CD8-positive, alpha-beta T cell (primary cell): ENCODE measurements at regions of chr22 and their contacts with region 1.

Region 1: DNA sequence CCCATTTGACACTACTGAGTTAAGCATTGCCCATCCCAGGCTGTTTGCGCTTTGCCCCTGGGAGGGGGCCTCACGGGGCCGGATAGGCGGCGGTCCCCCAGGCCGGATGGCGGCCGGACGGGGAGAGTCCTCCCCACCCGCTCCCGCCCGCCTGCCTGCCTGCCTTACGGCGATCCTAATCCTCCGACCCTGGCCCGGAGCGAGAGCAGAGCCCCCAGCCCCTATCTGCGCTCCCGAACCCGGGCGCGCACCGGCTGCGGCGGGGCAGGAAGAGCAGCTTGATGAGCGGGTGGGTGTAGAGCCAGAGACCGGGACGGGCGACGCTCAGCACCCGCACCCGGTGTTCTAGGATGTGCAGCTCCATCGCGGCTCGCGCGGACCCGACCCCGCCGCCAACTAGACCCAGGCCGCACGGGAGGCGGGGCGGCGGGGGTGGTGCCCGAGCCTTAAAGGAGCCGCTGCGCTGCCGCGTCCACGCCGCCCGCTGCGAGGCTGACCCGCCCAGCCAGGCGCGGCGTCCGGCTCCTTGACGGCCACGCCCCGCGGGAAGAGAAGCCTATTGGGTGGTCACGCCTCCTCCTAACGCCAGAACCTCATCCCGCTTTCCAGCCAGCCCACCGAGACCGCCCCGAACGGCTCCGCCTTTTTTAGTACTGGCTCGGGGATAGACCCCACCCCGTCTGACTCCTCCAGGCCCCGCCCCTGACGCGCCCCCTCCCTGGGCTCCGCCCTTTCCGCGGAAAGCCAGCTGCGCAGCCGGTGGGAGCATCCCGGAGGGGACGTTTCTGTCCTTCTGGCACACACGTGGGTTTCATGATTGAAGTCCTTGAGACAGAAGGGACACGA is at the start of gene CASTOR1:
- DNase-seq: peak; percentile 67 to 93 (median 91)
- ATAC-seq: peak; percentile 82
- H3K4me3 ChIP-seq: peak within 1 kb of the TSS; percentile 72 to 76
- H3K4me3 Mint-ChIP-seq: peak within 1 kb of the TSS; percentile 90
- H3K27ac ChIP-seq: peak within 1 kb of the TSS; percentile 44 to 71
- H3K27ac Mint-ChIP-seq: peak within 1 kb of the TSS; percentile 84
- H3K4me1 ChIP-seq: peaks cover 34% of the 10 kb centered on the region
- H3K4me1 Mint-ChIP-seq: peaks cover 45% of the 10 kb centered on the region
- H3K27me3 ChIP-seq: no peaks in the 10 kb centered on the region
- H3K27me3 Mint-ChIP-seq: no peaks in the 10 kb centered on the region
- CTCF ChIP-seq: no peak
- total RNA-seq, gene CASTOR1: 17.2 to 21.9 TPM

Region 2: DNA sequence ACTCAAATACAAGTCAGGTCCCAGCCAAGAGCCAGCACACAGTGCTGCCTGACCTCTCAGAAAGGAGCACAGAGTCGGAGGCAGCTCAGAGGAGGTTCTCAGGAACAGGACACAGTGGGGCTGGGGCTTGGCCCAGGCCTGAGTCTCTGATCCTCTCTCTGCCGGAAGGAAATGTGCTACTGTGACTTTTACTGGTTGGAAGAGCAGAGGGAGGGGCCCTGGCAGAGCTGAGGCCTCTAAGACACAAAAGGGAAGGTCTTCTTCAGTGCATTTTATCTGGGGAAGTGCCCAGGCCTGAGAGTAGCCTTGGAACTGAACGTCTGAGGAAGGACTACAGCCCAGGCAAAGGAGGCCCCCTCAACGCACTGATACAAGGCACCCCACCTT is 16.2 kb after region 1 on chr22:
- CTCF ChIA-PET with region 1: interaction called, 146 read pairs
- POLR2A ChIA-PET with region 1: interaction called, 130 read pairs
- intact Hi-C with region 1: loop called (anchors 1 kb)
- DNase-seq: peak in 8 of 9 experiments; percentile 43 to 80 (median 56)
- ATAC-seq: peak; percentile 50
- H3K4me3 ChIP-seq: peak overlapping the region; percentile 36 to 38
- H3K4me3 Mint-ChIP-seq: peak overlapping the region; percentile 69
- H3K27ac ChIP-seq: peak overlapping the region; percentile 62 to 77
- H3K27ac Mint-ChIP-seq: peak overlapping the region; percentile 98
- H3K4me1 ChIP-seq: peaks cover 100% of the 10 kb centered on the region
- H3K4me1 Mint-ChIP-seq: peaks cover 97% of the 10 kb centered on the region
- H3K27me3 ChIP-seq: no peaks in the 10 kb centered on the region
- H3K27me3 Mint-ChIP-seq: no peaks in the 10 kb centered on the region
- CTCF ChIP-seq: no peak

Region 3: GRCh38 chr22:30340911-30341685 is 51.7 kb after region 1 on chr22:
- CTCF ChIA-PET with region 1: interaction called, 28 read pairs
- POLR2A ChIA-PET with region 1: interaction called, 3 read pairs
- intact Hi-C with region 1: no loop called
- DNase-seq: no peak
- ATAC-seq: no peak
- H3K4me3 ChIP-seq: no peak overlapping the region
- H3K4me3 Mint-ChIP-seq: no peak overlapping the region
- H3K27ac ChIP-seq: no peak overlapping the region
- H3K27ac Mint-ChIP-seq: no peak overlapping the region
- H3K4me1 ChIP-seq: no peaks in the 10 kb centered on the region
- H3K4me1 Mint-ChIP-seq: peaks cover 2% of the 10 kb centered on the region
- H3K27me3 ChIP-seq: no peaks in the 10 kb centered on the region
- H3K27me3 Mint-ChIP-seq: no peaks in the 10 kb centered on the region
- CTCF ChIP-seq: no peak

Region 4: GRCh38 chr22:30365891-30366290 is 76.5 kb after region 1 on chr22:
- CTCF ChIA-PET with region 1: interaction called, 15 read pairs
- POLR2A ChIA-PET with region 1: no interaction called
- intact Hi-C with region 1: no loop called
- DNase-seq: no peak
- ATAC-seq: no peak
- H3K4me3 ChIP-seq: no peak overlapping the region
- H3K4me3 Mint-ChIP-seq: no peak overlapping the region
- H3K27ac ChIP-seq: no peak overlapping the region
- H3K27ac Mint-ChIP-seq: no peak overlapping the region
- H3K4me1 ChIP-seq: no peaks in the 10 kb centered on the region
- H3K4me1 Mint-ChIP-seq: no peaks in the 10 kb centered on the region
- H3K27me3 ChIP-seq: no peaks in the 10 kb centered on the region
- H3K27me3 Mint-ChIP-seq: no peaks in the 10 kb centered on the region
- CTCF ChIP-seq: no peak

Region 5: GRCh38 chr22:30479981-30480380 is 190.6 kb after region 1 on chr22:
- CTCF ChIA-PET with region 1: interaction called, 24 read pairs
- POLR2A ChIA-PET with region 1: no interaction called
- intact Hi-C with region 1: loop called (anchors 1 kb)
- DNase-seq: no peak
- ATAC-seq: no peak
- H3K4me3 ChIP-seq: no peak overlapping the region
- H3K4me3 Mint-ChIP-seq: no peak overlapping the region
- H3K27ac ChIP-seq: no peak overlapping the region
- H3K27ac Mint-ChIP-seq: no peak overlapping the region
- H3K4me1 ChIP-seq: no peaks in the 10 kb centered on the region
- H3K4me1 Mint-ChIP-seq: peaks cover 2% of the 10 kb centered on the region
- H3K27me3 ChIP-seq: no peaks in the 10 kb centered on the region
- H3K27me3 Mint-ChIP-seq: peaks cover 2% of the 10 kb centered on the region
- CTCF ChIP-seq: no peak